Endothelial cell of umbilical vein (primary cell): ENCODE measurements at regions of chr21 and their contacts with region 1.

Region 1: GRCh38 chr21:15894596-15894995 is 164.8 kb downstream of the USP25 start:
- DNase-seq: peak; percentile 36
- H3K4me3 ChIP-seq: no peak overlapping the region
- H3K27ac ChIP-seq: no peak overlapping the region
- H3K4me1 ChIP-seq: no peaks in the 10 kb centered on the region
- H3K27me3 ChIP-seq: no peaks in the 10 kb centered on the region
- CTCF ChIP-seq: peak in 1 of 2 donors; percentile 13
- POLR2A ChIP-seq: no peak

Region 2: DNA sequence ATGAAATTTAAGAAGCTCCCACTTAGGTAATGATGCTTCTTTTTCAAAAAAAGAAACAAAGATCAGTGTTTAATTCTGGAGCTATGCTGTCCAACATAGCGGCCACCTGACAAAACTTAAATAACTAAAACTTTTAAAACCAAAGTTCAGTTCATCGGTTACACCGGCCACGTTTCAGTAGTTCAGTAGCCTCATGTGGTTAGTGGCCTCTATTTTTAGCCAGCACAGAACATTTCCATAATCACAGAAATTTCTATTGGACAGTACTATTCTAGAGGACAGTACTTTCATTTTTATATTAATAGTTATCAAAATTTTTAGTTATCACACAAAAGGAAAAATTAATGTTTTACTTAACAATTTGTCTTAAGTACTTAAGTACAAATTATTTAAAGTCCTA is 23.8 kb before region 1 on chr21:
- CTCF ChIA-PET with region 1: no interaction called
- POLR2A ChIA-PET with region 1: no interaction called
- dilution Hi-C with region 1: no loop called
- intact Hi-C with region 1: no loop called
- DNase-seq: no peak
- H3K4me3 ChIP-seq: no peak overlapping the region
- H3K27ac ChIP-seq: no peak overlapping the region
- H3K4me1 ChIP-seq: peaks cover 10% of the 10 kb centered on the region
- H3K27me3 ChIP-seq: no peaks in the 10 kb centered on the region
- CTCF ChIP-seq: no peak
- POLR2A ChIP-seq: no peak

Region 3: DNA sequence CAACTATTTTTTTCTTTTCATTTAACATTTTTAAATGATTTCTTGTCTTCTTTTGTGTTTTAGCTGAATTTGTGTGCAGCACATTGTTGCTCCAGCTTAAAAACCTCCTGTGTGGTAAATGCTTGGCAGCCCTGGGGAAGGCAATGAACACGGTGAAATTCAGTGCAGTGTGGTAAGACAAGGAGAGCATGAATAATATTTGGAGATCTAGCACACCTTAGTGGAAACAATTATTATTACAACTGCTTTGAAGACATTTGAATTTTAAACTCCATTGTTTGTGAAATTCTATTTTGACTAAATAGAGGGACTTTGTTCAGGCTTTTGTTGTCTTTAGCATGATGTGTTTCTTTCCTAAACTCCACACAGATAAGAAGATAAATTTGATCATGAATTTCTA is 1375.6 kb after region 1 on chr21:
- CTCF ChIA-PET with region 1: no interaction called
- POLR2A ChIA-PET with region 1: no interaction called
- dilution Hi-C with region 1: no loop called
- intact Hi-C with region 1: loop called (anchors 2 kb)
- DNase-seq: peak; percentile 38
- H3K4me3 ChIP-seq: no peak overlapping the region
- H3K27ac ChIP-seq: no peak overlapping the region
- H3K4me1 ChIP-seq: no peaks in the 10 kb centered on the region
- H3K27me3 ChIP-seq: no peaks in the 10 kb centered on the region
- CTCF ChIP-seq: peak; percentile 13 to 15
- POLR2A ChIP-seq: no peak